Esophagus squamous epithelium (tissue), 5 donors: ENCODE measurements at regions of chr12 and their contacts with region 1.

Region 1: DNA sequence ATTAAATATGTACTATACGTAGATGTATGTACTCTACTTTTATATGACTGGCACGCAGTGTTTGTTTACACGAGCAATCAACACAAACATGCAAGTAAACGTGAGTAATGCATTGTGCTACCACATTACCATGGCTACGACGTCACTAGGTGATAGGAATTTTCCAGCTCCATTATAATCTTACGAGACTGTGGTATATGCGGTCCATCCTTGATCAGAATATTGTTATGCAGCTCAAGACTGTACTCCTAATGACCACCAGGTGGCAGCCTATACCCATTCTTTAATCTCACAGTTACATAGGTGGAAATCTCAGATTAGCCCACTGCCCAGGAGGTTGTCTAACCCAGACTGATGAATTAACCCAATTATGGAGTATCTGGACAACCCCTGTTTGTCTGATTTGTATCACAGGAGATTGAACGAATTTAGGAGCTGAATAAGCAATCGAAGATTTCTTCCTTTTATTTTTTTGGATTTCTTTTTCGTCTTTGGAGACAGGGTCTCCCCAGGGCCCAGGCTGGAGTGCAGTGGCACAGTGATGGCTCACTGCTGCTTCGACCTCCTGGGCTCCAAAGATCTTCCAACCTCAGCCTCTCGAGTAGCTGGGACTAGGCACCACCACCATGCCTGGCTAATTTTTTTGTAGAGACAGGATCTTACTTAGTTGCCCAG is 8.7 kb upstream of the TESPA1 start:
- DNase-seq: no peak
- H3K4me3 ChIP-seq: no peak overlapping the region
- H3K27ac ChIP-seq: no peak overlapping the region
- H3K4me1 ChIP-seq: peaks cover 0 to 6% (median 0%) of the 10 kb centered on the region in 3 donors
- H3K27me3 ChIP-seq: no peaks in the 10 kb centered on the region
- CTCF ChIP-seq: peak; percentile 76 to 86 (median 84)
- POLR2A ChIP-seq: no peak

Region 2: DNA sequence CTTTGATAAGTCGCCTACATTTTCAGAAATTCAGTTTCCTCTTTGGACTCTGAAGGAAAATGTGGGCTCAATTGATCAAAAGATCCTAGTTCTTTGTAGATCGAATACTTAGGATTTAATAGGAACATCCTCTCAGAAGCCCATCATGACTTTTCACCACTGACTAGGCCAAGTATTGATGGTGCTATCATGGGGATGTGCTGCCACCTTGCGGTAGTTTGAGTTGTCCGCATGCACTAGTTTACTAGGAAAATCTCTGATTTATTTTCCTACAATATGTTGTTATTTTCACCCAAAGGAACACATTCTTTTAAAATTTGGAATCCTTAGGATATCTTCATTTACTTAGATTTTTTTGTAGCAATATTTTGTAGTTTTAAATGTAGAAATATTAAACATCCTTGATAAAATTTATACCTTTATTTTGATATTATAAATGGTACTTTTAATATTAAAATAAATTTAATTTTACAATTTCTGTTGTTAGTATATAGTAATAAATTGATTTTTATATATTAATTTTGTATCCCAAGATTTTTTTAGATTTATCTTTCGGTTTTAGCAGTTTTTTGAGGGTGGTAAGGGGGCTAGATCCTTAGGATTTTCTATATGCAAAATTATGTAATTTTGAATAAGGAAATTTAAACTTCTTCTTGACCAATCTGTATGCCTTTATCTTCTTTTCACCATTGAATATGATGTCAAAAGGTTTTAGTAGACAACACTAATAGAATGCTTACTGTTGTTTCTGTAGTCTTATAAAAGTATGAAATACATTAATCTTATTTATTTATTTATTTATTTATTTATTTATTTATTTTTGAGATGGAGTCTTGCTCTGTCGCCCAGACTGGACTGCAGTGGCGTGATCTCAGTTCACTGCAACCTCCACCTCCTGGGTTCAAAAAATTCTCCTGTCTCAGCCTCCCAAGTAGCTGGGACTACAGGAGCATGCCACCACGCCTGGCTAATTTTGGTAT is 80.0 kb after region 1 on chr12:
- intact Hi-C with region 1: loop called (anchors 5 kb)
- DNase-seq: no peak
- H3K4me3 ChIP-seq: no peak overlapping the region
- H3K27ac ChIP-seq: no peak overlapping the region
- H3K4me1 ChIP-seq: no peaks in the 10 kb centered on the region
- H3K27me3 ChIP-seq: peaks cover 0 to 14% (median 0%) of the 10 kb centered on the region in 4 donors
- CTCF ChIP-seq: peak; percentile 72 to 84 (median 82)
- POLR2A ChIP-seq: no peak